Naive thymus-derived CD4-positive, alpha-beta T cell (primary cell): ENCODE measurements at regions of chr2 and their contacts with region 1.

Region 1: DNA sequence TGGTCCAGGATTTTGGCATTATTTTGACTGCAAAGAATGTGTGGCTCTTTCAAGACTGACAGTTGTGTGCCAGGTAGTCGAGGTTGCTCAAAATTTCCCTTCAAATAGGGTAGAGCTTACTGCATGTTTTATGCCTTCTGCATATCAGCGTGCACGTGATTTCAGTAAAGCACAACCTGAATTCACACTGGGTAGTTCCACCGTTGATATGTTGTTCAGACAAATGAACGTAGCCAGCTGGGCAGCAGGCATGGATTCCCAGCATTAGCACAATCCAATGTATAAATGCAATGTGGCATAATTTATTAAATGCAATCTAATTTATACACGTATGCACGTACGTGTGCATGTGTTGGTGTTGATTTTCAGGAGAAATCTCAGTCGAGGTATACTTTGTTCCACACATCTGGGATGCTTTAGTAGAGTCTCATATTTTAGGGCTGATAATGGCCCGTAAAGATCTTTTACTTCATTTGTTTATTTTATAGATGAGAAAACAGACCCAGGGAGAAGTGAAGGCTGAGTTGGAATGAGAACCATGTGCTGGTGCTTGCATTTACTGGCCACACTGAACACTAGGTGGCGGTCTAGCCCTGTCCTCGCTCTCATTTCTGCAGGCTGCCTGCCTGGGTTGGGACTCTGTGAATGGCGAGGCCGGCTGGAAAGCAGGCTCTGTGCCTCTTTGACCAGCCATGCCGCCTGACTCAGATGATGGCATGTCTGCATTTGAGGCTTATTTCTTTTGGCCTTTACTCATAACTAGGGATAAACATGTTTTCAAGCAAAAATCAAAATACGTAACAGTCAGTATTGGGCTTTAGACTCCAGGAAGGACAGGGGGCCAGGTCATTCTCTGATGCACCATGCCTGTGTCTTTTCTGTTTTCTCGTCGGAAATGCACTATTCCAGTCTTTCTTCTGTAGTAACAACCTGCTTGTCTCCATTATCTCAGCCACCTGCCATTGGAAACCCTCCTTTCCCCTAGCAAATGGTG is 120.4 kb downstream of the RNF144A start:
- DNase-seq: peak; percentile 16 to 64 (median 56)
- ATAC-seq: peak; percentile 90
- H3K4me3 ChIP-seq: no peak overlapping the region
- H3K4me3 Mint-ChIP-seq: no peak overlapping the region
- H3K27ac ChIP-seq: no peak overlapping the region
- H3K27ac Mint-ChIP-seq: peak overlapping the region in 8 of 9 donors; percentile 25 to 74 (median 61)
- H3K4me1 ChIP-seq: no peaks in the 10 kb centered on the region
- H3K4me1 Mint-ChIP-seq: peaks cover 2 to 20% (median 10%) of the 10 kb centered on the region in 7 donors
- H3K27me3 ChIP-seq: no peaks in the 10 kb centered on the region
- H3K27me3 Mint-ChIP-seq: no peaks in the 10 kb centered on the region

Region 2: GRCh38 chr2:7022492-7023385 is 14.9 kb before region 1 on chr2:
- CTCF ChIA-PET with region 1: no interaction called
- POLR2A ChIA-PET with region 1: no interaction called
- intact Hi-C with region 1: no loop called
- DNase-seq: no peak
- ATAC-seq: no peak
- H3K4me3 ChIP-seq: no peak overlapping the region
- H3K4me3 Mint-ChIP-seq: no peak overlapping the region
- H3K27ac ChIP-seq: no peak overlapping the region
- H3K27ac Mint-ChIP-seq: peak overlapping the region in 6 of 9 donors; percentile 2 to 79 (median 57)
- H3K4me1 ChIP-seq: no peaks in the 10 kb centered on the region
- H3K4me1 Mint-ChIP-seq: peaks cover 0 to 8% (median 4%) of the 10 kb centered on the region in 7 donors
- H3K27me3 ChIP-seq: no peaks in the 10 kb centered on the region
- H3K27me3 Mint-ChIP-seq: no peaks in the 10 kb centered on the region

Region 3: GRCh38 chr2:7077660-7078267 is 40.1 kb after region 1 on chr2:
- CTCF ChIA-PET with region 1: no interaction called
- POLR2A ChIA-PET with region 1: no interaction called
- intact Hi-C with region 1: no loop called
- DNase-seq: no peak
- ATAC-seq: no peak
- H3K4me3 ChIP-seq: no peak overlapping the region
- H3K4me3 Mint-ChIP-seq: no peak overlapping the region
- H3K27ac ChIP-seq: no peak overlapping the region
- H3K27ac Mint-ChIP-seq: no peak overlapping the region
- H3K4me1 ChIP-seq: no peaks in the 10 kb centered on the region
- H3K4me1 Mint-ChIP-seq: peaks cover 0 to 6% (median 0%) of the 10 kb centered on the region in 7 donors
- H3K27me3 ChIP-seq: no peaks in the 10 kb centered on the region
- H3K27me3 Mint-ChIP-seq: no peaks in the 10 kb centered on the region

Region 4: GRCh38 chr2:7203055-7203467 is 165.4 kb after region 1 on chr2:
- CTCF ChIA-PET with region 1: no interaction called
- POLR2A ChIA-PET with region 1: no interaction called
- intact Hi-C with region 1: loop called in 1 of 2 experiments (anchors 1 kb)
- DNase-seq: peak; percentile 31 to 65 (median 55)
- ATAC-seq: peak; percentile 81
- H3K4me3 ChIP-seq: no peak overlapping the region
- H3K4me3 Mint-ChIP-seq: no peak overlapping the region
- H3K27ac ChIP-seq: no peak overlapping the region
- H3K27ac Mint-ChIP-seq: no peak overlapping the region
- H3K4me1 ChIP-seq: no peaks in the 10 kb centered on the region
- H3K4me1 Mint-ChIP-seq: peaks cover 0 to 6% (median 0%) of the 10 kb centered on the region in 7 donors
- H3K27me3 ChIP-seq: no peaks in the 10 kb centered on the region
- H3K27me3 Mint-ChIP-seq: no peaks in the 10 kb centered on the region